K562 (cell line): ENCODE measurements at regions of chr2 and their contacts with region 1.

Region 1: GRCh38 chr2:216498418-216499413 is at the start of gene RPL37A:
- DNase-seq: peak; percentile 85 to 95 (median 88)
- ATAC-seq: peak; percentile 89
- H3K4me3 ChIP-seq: peak within 1 kb of the TSS; percentile 83
- H3K27ac ChIP-seq: peak within 1 kb of the TSS; percentile 86
- H3K4me1 ChIP-seq: peaks cover 0 to 2% of the 10 kb centered on the region in 2 experiments; a peak in 3 of 5 replicates
- H3K27me3 ChIP-seq: no peaks in the 10 kb centered on the region
- CTCF ChIP-seq: no peak
- EP300 ChIP-seq: no peak
- POLR2A ChIP-seq: peak; percentile 99
- RAD21 ChIP-seq: 0 out of 4 replicates have a peak, but pooled peaks of 1 of the 2 experiments have one; percentile 12
- polyA plus RNA-seq, gene RPL37A: 2,078 to 2,436 TPM

Region 2: GRCh38 chr2:216416571-216417307 is 82.0 kb before region 1 on chr2:
- CTCF ChIA-PET with region 1: no interaction called
- POLR2A ChIA-PET with region 1: interaction called, 3 read pairs
- in situ Hi-C with region 1: no loop called
- intact Hi-C with region 1: loop called (anchors 2 kb)
- DNase-seq: peak; percentile 37 to 84 (median 60)
- ATAC-seq: peak; percentile 60
- H3K4me3 ChIP-seq: no peak overlapping the region; the same call in 1 of the 2 replicates
- H3K27ac ChIP-seq: peak overlapping the region; percentile 84
- H3K4me1 ChIP-seq: peaks cover 19 to 27% of the 10 kb centered on the region in 2 experiments
- H3K27me3 ChIP-seq: no peaks in the 10 kb centered on the region
- CTCF ChIP-seq: no peak
- EP300 ChIP-seq: peak; percentile 88
- POLR2A ChIP-seq: no peak
- RAD21 ChIP-seq: no peak

Region 3: GRCh38 chr2:216486708-216487107 is 12.0 kb before region 1 on chr2:
- CTCF ChIA-PET with region 1: no interaction called
- POLR2A ChIA-PET with region 1: interaction called, 18 read pairs
- in situ Hi-C with region 1: no loop called
- intact Hi-C with region 1: no loop called
- DNase-seq: no peak
- ATAC-seq: no peak
- H3K4me3 ChIP-seq: no peak overlapping the region
- H3K27ac ChIP-seq: no peak overlapping the region
- H3K4me1 ChIP-seq: no peaks in the 10 kb centered on the region; a peak in 3 of 5 replicates
- H3K27me3 ChIP-seq: no peaks in the 10 kb centered on the region
- CTCF ChIP-seq: no peak
- EP300 ChIP-seq: no peak
- POLR2A ChIP-seq: no peak
- RAD21 ChIP-seq: no peak

Region 4: GRCh38 chr2:216632952-216633615 is 134.4 kb after region 1 on chr2 and contains the start of gene IGFBP2:
- CTCF ChIA-PET with region 1: no interaction called
- POLR2A ChIA-PET with region 1: no interaction called
- in situ Hi-C with region 1: no loop called
- intact Hi-C with region 1: no loop called
- DNase-seq: no peak
- ATAC-seq: no peak
- H3K4me3 ChIP-seq: no peak within 1 kb of the TSS
- H3K27ac ChIP-seq: no peak within 1 kb of the TSS
- H3K4me1 ChIP-seq: no peaks in the 10 kb centered on the region; a peak in 1 of 5 replicates
- H3K27me3 ChIP-seq: peaks cover 5 to 35% of the 10 kb centered on the region in 2 experiments
- CTCF ChIP-seq: no peak
- EP300 ChIP-seq: no peak
- POLR2A ChIP-seq: no peak
- RAD21 ChIP-seq: no peak
- polyA plus RNA-seq, gene IGFBP2: not detected